A549 (cell line): ENCODE measurements at regions of chr5 and their contacts with region 1.

Region 1: DNA sequence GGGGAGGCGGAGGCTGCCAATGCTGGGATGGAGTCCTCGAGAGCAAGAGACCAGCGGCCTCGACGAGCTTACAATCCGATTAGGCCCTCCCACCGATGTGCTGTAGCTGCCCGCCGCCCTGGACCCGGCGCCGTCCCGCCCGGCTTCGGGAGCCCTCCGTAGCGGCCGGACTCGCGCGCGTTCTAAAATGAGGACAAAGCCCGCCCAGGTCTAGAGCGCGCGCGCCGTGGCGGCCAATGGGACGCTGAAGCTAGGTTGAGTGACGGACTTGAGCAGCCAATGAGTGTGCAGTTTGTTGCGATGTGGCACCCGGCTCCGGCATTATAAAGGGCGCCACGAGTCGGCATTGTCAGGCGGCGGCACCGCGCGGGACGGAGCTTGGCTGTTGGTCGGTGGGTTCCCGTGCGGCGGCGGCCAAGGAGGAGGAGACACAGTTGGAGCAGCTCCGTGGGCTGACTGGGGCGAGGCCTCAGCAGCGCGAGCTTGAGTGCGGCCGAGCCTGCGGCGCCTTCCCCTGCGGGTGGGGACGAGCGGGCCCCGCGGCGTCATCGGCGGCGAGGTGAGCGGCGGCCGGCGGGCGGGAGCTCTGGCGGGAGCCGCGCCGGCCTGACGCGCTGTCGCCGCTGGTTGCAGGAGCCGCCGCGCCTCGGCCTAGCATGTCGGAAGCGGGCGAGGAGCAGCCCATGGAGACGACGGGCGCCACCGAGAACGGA is at the start of gene HNRNPAB:
- DNase-seq: peak; percentile 98 to 99
- ATAC-seq: peak; percentile 86 to 93
- H3K4me3 ChIP-seq: peak within 1 kb of the TSS; percentile 96
- H3K27ac ChIP-seq: peak within 1 kb of the TSS; percentile 94 to 95
- H3K4me1 ChIP-seq: peaks cover 30% of the 10 kb centered on the region
- CTCF ChIP-seq: no peak
- EP300 ChIP-seq: no peak
- POLR2A ChIP-seq: peak; percentile 100
- RAD21 ChIP-seq: no peak
- polyA plus RNA-seq, gene HNRNPAB: 140 and 200 TPM in 2 replicates

Region 2: GRCh38 chr5:178153573-178154343 is 50.6 kb before region 1 on chr5 and contains the start of gene NHP2:
- CTCF ChIA-PET with region 1: no interaction called
- POLR2A ChIA-PET with region 1: interaction called, 16 read pairs
- DNase-seq: peak; percentile 95 to 98
- ATAC-seq: peak; percentile 97
- H3K4me3 ChIP-seq: peak within 1 kb of the TSS; percentile 94
- H3K27ac ChIP-seq: peak within 1 kb of the TSS; percentile 85 to 88
- H3K4me1 ChIP-seq: peaks cover 13% of the 10 kb centered on the region
- CTCF ChIP-seq: no peak
- EP300 ChIP-seq: no peak
- POLR2A ChIP-seq: peak; percentile 46
- RAD21 ChIP-seq: no peak
- polyA plus RNA-seq, gene NHP2: 177 and 205 TPM in 2 replicates

Region 3: DNA sequence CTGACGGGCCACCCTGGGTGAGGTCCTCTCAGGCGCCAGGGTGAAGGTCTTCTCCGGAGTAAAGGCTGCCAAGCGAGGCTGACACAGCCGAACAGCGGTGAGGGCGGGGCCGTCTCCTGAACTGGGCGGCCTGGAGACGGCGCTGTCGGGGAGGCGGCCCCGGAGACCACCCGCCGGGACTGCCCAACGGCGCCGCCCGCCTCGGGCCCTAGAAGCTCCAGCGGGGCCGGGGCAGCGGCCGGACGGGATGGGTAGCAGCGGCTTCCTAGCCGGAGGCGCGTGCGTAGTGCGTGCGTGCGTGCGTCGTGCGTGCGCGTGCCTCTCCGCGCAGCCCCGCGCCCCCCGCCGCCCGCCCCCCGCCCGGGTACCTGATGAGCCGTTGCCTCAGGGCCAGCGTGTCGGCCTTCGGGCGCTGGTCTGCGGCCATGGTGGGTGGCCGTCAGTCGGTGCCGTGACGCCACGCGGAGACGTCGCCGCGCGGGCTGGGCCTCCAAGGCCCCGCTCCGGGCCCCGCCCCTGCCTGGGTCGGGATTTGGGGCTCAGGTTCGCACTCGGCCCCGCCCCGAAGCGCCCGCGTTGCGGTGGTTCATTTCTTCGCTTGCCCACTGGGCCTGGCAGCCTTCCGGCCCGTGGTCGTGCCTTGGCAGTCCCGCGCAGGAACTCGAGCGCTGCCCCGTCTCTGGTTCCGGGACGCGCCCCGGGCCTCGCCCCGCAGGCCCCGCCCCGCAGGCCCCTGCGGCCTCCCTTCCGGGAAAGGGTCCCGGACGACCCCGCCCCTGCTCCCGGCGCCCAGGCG is 28.0 kb after region 1 on chr5 and contains the start of gene PHYKPL:
- CTCF ChIA-PET with region 1: no interaction called
- POLR2A ChIA-PET with region 1: interaction called, 14 read pairs
- DNase-seq: peak; percentile 64 to 80
- ATAC-seq: peak; percentile 77 to 81
- H3K4me3 ChIP-seq: peak within 1 kb of the TSS; percentile 93
- H3K27ac ChIP-seq: peak within 1 kb of the TSS; percentile 91 to 96
- H3K4me1 ChIP-seq: peaks cover 18% of the 10 kb centered on the region
- CTCF ChIP-seq: no peak
- EP300 ChIP-seq: no peak
- POLR2A ChIP-seq: peak; percentile 68
- RAD21 ChIP-seq: no peak
- polyA plus RNA-seq, gene PHYKPL: 21.9 and 24.6 TPM in 2 replicates

Region 4: GRCh38 chr5:179550511-179551230 is 1346.3 kb after region 1 on chr5 and contains the start of gene RUFY1:
- CTCF ChIA-PET with region 1: no interaction called
- POLR2A ChIA-PET with region 1: interaction called, 10 read pairs
- DNase-seq: peak; percentile 81 to 82
- ATAC-seq: peak; percentile 83 to 84
- H3K4me3 ChIP-seq: peak within 1 kb of the TSS; percentile 63
- H3K27ac ChIP-seq: peak within 1 kb of the TSS; percentile 91 to 99
- H3K4me1 ChIP-seq: peaks cover 24% of the 10 kb centered on the region
- CTCF ChIP-seq: no peak
- EP300 ChIP-seq: no peak
- POLR2A ChIP-seq: peak; percentile 48
- RAD21 ChIP-seq: no peak
- polyA plus RNA-seq, gene RUFY1: 30.6 and 39.5 TPM in 2 replicates